PC-3 (cell line): ENCODE measurements at regions of chr11 and their contacts with region 1.

Region 1: DNA sequence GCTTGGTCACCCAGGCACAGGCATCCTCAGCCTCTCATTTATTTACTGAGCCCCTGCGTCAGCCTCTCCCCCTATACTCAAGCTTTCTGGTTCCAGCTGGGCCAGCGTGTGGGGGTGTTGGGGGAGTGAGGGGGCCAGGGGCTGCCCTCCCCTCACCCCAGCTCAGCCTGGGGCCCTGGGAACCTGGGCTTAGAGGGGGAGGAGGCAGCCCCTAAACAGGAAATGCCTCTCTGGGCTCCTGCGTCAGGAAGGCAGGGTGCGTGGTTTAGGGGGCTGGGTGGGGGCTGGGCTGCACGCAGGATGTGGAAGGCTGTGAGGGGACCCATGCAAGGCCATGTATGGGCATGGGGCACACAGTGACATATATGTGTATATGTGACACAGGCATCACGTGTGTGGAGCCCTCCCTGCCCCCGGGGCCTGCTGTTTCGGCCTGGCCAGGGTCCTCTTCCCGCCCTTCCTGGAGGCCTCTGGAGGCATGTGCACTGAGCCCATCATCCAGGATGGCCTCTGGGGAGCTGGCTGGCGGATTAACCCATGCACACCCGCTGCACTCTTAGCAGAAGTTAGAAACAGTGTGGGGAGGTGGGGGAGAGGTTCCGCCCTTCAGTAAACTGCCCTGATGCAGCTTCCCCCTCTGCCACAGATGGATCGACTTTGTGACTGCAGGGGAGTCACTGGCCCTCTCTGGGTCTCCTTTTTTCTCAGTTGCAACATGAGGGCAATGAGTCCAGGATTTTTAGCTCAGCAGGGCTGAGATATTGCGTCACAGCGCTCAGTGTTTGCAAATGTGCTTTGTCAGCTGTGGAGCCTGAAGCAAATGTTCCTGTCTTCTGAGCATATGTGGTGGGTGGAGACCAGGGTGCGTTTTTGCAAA is 1.1 kb upstream of the CD248 start:
- DNase-seq: no peak
- ATAC-seq: no peak
- H3K4me3 ChIP-seq: no peak overlapping the region
- H3K27ac ChIP-seq: no peak overlapping the region
- H3K4me1 ChIP-seq: peaks cover 4% of the 10 kb centered on the region
- H3K27me3 ChIP-seq: no peaks in the 10 kb centered on the region
- CTCF ChIP-seq: no peak

Region 2: GRCh38 chr11:66062408-66062807 is 255.6 kb before region 1 on chr11:
- CTCF ChIA-PET with region 1: interaction called, 11 read pairs
- POLR2A ChIA-PET with region 1: no interaction called
- intact Hi-C with region 1: no loop called
- DNase-seq: no peak
- ATAC-seq: no peak
- H3K4me3 ChIP-seq: no peak overlapping the region
- H3K27ac ChIP-seq: no peak overlapping the region
- H3K4me1 ChIP-seq: no peaks in the 10 kb centered on the region
- H3K27me3 ChIP-seq: no peaks in the 10 kb centered on the region
- CTCF ChIP-seq: no peak